ENCODE measurements at regions of chr3 and their contacts with region 1.

Region 1: DNA sequence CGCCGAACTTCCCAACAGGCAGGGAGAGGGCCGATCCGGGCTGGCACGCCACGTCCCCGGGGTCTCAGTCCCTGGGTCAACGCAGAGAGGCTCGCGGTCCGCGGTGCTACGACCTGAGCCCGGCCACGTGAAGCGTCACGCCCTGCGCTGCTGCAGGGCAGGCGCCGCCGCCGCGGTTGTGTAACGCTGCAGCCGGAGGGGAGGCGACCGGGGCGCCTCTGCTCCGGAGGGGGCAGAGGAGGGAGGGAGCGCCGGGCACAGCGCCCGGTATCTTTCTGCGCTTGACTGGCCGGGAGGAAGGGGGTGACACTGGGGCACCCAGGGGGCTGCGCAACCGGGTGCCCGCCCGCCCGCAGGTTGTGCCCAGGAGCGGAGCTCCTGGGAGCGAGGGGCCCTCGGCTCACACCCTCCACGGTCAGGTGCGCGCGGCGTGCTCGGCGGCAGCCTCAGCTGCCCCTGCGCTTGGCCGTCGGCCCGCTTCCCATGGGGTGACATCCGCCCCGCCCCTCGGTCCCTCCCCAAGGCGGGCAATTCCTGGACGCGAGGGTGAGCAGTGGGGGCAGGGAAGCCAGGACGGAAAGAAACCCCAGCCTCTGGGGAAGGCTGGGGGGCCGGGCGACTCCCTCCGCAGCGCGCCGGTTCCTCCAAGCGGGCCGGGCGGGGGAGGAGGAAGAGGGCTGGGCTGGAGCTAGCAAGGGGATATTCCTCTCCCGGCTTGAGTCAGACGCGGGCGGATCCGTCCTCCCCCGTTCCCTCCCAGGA is 852 bp upstream of the BHLHE40 start:
- DNase-seq: peak; percentile 84
- H3K4me3 Mint-ChIP-seq: peak overlapping the region; percentile 87
- H3K27ac Mint-ChIP-seq: peak overlapping the region; percentile 100
- H3K4me1 Mint-ChIP-seq: peaks cover 34% of the 10 kb centered on the region
- H3K27me3 Mint-ChIP-seq: no peaks in the 10 kb centered on the region

Region 2: GRCh38 chr3:4493014-4493940 is 485.1 kb before region 1 on chr3 and contains the start of gene ITPR1:
- intact Hi-C with region 1: loop called (anchors 1 kb)
- DNase-seq: peak; percentile 98
- H3K4me3 Mint-ChIP-seq: peak within 1 kb of the TSS; percentile 96
- H3K27ac Mint-ChIP-seq: peak within 1 kb of the TSS; percentile 87
- H3K4me1 Mint-ChIP-seq: peaks cover 44% of the 10 kb centered on the region
- H3K27me3 Mint-ChIP-seq: peaks cover 28% of the 10 kb centered on the region
- total RNA-seq, gene ITPR1: 117 and 137 TPM in 2 replicates

Region 3: DNA sequence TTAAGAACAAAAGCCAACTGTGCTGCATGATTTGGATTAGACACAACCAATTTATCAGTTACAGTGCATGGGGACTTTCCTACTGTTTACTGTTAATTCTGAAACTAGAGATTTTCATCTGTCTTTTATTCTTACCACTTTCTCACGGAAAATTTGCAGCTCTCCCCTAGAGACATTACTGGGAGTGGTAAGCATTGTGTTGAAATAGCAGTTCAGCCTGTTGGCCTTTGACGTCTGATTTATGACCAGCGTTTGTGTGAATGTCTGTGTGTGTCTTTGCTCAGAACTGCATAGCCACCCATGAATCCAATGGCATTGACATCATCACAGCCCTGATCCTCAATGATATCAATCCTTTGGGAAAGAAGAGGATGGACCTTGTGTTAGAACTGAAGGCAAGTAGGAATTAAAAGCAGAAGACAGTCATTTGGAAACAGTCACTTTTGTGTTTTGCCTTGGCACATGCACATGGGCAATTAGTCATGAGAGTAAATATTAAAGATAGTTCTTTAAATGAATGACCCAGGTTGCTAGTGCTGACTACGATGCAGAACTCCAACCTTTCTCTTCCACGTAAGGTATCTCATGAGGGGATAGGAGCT is 201.3 kb before region 1 on chr3:
- intact Hi-C with region 1: loop called (anchors 1 kb)
- DNase-seq: peak; percentile 37
- H3K4me3 Mint-ChIP-seq: peak overlapping the region; percentile 67
- H3K27ac Mint-ChIP-seq: peak overlapping the region; percentile 100
- H3K4me1 Mint-ChIP-seq: peaks cover 77% of the 10 kb centered on the region
- H3K27me3 Mint-ChIP-seq: no peaks in the 10 kb centered on the region

Region 4: GRCh38 chr3:4850928-4851265 is 127.5 kb before region 1 on chr3:
- intact Hi-C with region 1: loop called (anchors 1 kb)
- DNase-seq: no peak
- H3K4me3 Mint-ChIP-seq: peak overlapping the region; percentile 28
- H3K27ac Mint-ChIP-seq: peak overlapping the region; percentile 97
- H3K4me1 Mint-ChIP-seq: peaks cover 81% of the 10 kb centered on the region
- H3K27me3 Mint-ChIP-seq: no peaks in the 10 kb centered on the region

Region 5: DNA sequence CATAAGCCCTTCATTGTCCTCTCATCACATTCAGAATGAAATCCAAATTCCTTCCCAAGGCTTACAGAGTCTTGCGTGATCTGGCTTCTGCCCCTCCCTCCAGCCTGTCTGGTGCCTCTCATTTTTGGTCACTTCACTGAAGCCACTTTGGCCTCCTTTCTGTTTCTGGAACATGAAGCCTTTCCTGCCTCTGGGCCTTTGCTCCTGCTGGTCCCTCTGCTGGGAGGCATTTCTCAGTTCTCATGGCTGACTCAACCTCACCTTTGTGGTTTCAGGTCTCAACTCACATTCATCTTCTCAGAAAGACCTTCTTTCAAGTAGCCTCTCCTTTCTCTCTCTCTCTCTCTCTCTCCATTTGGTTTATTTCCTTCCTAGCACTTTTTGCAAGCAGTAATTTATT is 43.0 kb before region 1 on chr3:
- intact Hi-C with region 1: loop called (anchors 2 kb)
- DNase-seq: no peak
- H3K4me3 Mint-ChIP-seq: no peak overlapping the region
- H3K27ac Mint-ChIP-seq: no peak overlapping the region
- H3K4me1 Mint-ChIP-seq: peaks cover 25% of the 10 kb centered on the region
- H3K27me3 Mint-ChIP-seq: no peaks in the 10 kb centered on the region

Region 6: GRCh38 chr3:5122030-5122740 is 143.8 kb after region 1 on chr3 and contains the start of gene ARL8B:
- intact Hi-C with region 1: loop called (anchors 5 kb)
- DNase-seq: peak; percentile 88
- H3K4me3 Mint-ChIP-seq: peak within 1 kb of the TSS; percentile 95
- H3K27ac Mint-ChIP-seq: peak within 1 kb of the TSS; percentile 83
- H3K4me1 Mint-ChIP-seq: peaks cover 28% of the 10 kb centered on the region
- H3K27me3 Mint-ChIP-seq: no peaks in the 10 kb centered on the region
- total RNA-seq, gene ARL8B: 37.9 and 40.6 TPM in 2 replicates